ENCODE measurements at regions of chr12 and their contacts with region 1.

Region 1: DNA sequence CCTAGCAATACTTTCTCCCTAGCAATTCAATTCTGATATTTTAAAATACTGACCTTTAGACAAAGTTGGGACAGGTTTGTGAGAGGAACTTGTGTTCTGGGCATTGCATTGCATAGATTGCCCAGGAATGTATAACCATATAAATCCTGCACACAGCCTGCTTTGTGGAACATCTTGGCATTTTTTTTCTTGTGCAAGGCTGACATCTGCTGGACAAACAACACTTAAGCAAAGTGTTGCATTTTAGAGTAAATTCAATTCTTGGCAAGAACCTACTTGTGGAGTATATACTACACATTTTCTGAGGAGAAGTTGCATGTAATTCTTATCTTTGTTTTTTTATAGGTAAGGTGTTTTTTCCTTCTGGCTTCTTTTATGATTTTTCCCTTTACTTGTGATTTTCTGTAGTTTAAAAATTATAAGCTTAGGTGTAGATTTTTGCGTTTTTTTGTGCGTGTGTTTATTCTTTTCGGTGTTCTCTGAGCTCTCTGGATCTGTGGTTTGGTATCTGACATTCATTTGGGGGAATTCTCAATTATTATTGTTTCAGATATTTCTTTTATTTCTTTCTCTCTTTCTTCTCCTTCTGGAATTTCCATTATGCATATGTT is 26.4 kb downstream of the TESPA1 start:
- DNase-seq: no peak
- ATAC-seq: peak; percentile 73

Region 2: GRCh38 chr12:54596526-54596946 is 361.6 kb before region 1 on chr12:
- intact Hi-C with region 1: loop called (anchors 10 kb)
- DNase-seq: peak; percentile 76
- ATAC-seq: peak; percentile 72

Region 3: GRCh38 chr12:54701940-54702592 is 256.1 kb before region 1 on chr12:
- intact Hi-C with region 1: loop called (anchors 5 kb)
- DNase-seq: no peak
- ATAC-seq: no peak

Region 4: DNA sequence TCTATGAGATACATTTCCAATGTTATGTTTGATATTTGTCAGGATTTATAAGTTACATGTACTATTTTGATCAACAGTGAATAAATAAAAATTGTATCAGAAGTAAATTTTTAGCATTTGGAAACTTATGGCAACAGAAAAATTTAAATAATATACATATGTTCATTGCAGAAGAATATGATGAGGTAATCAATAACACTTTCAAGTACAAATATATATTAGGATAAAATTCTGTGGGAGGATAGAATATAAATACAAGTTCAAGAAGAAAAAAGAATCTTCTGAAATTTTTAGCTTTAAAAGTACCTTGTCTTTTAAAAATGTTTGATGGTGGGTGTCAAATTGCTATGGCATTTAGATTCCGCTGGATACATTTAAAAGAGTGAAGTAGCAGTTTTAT is 206.7 kb before region 1 on chr12:
- intact Hi-C with region 1: loop called (anchors 5 kb)
- DNase-seq: no peak
- ATAC-seq: no peak

Region 5: DNA sequence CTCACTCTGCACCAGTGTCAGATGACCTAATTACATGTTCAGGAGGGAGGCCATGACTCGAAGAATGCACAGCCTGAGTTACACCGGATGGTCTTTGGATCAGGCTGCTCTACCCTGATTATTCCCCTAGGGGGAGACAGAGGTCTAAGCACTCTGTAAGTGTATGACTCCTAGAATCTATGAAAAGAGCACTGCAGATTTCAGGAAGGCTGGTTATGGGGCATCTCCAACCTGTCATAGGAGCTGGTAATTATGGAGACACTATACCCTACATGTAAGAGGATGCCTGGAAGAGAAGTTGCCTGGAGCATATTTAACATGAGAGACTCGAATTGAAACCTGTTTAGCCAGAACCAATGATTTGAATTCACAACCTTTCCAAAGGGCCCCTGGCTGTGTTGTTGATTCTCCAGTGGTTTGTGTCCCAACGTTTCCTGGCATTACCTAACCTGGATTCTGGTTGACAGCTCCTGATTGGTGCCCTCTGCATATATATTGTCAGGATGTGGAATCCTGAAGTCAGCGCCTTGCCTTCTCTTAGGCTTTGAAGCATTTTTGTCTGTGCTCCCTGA is 104.1 kb before region 1 on chr12 and contains the start of gene MUCL1:
- intact Hi-C with region 1: loop called (anchors 10 kb)
- DNase-seq: no peak
- ATAC-seq: peak; percentile 69
- total RNA-seq, gene MUCL1: not detected